ENCODE measurements at regions of chr17 and their contacts with region 1.

Region 1: DNA sequence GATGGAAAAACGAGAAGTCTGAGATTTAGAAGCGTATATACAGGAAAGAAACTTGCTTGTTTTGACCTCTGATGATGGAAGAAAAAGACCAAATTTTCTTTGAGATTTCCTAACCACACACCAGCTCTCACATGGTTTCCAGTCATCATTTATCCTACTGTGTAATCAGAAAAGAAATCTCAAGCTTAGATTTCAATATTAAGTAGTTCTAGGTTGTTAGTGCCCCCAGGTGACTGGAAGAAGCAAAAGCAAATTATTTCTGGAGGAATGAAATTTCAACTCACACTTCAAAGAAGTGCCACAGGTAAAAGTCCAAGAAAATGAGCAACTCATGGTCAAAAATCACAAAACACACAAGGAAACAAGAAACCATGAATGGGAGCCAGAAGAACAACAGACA is 51.8 kb upstream of the KDM6B start:
- DNase-seq: peak; percentile 43
- ATAC-seq: no peak
- H3K4me3 ChIP-seq: no peak overlapping the region
- H3K27ac ChIP-seq: no peak overlapping the region
- H3K4me1 ChIP-seq: no peaks in the 10 kb centered on the region
- H3K27me3 ChIP-seq: no peaks in the 10 kb centered on the region
- CTCF ChIP-seq: peak; percentile 57

Region 2: GRCh38 chr17:7740481-7741001 is 41.7 kb before region 1 on chr17:
- CTCF ChIA-PET with region 1: interaction called, 39 read pairs
- POLR2A ChIA-PET with region 1: interaction called, 6 read pairs
- intact Hi-C with region 1: loop called (anchors 1 kb)
- DNase-seq: no peak
- ATAC-seq: no peak
- H3K4me3 ChIP-seq: no peak overlapping the region
- H3K27ac ChIP-seq: no peak overlapping the region
- H3K4me1 ChIP-seq: peaks cover 5% of the 10 kb centered on the region; the same call in 1 of the 2 replicates
- H3K27me3 ChIP-seq: no peaks in the 10 kb centered on the region
- CTCF ChIP-seq: no peak

Region 3: DNA sequence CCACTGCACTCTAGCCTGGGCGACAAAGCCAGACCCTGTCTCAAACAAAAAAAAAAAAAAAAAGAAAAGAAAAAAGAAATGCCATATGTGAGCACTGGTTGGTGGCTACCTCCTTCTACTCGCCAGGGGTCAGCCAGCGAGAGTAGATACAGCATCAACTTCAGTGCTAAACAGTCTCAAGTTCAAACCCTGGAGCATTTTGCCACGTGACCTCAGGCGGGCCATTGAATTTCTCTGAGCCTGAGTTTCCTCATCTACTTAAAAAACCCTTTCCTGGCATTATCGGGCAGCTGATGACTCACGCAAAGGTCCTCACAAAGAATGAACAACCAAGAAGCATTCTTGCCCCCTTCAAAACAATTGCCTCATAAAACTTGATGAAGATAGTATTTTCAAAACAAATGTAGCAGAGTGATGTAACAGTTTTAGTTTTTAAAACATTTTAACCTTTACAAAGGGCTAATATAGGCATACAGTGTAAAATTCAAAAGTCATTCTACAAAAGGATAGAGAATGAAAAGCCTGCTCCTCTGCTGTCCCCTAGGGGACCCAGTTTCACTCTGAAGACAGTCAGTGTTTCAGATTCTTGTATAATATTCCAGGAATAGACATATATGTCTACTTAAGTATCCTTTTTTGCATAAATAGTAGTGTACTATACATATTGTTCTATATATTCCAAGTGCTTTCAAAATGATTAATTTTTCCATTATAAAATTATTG is 36.3 kb before region 1 on chr17:
- CTCF ChIA-PET with region 1: interaction called, 39 read pairs
- POLR2A ChIA-PET with region 1: interaction called, 6 read pairs
- intact Hi-C with region 1: loop called (anchors 1 kb)
- DNase-seq: peak; percentile 82
- ATAC-seq: peak; percentile 42
- H3K4me3 ChIP-seq: no peak overlapping the region
- H3K27ac ChIP-seq: peak overlapping the region; percentile 12; the same call in 1 of the 2 replicates
- H3K4me1 ChIP-seq: peaks cover 34% of the 10 kb centered on the region
- H3K27me3 ChIP-seq: no peaks in the 10 kb centered on the region
- CTCF ChIP-seq: peak; percentile 35; the same call in 1 of the 2 replicates